ENCODE measurements at regions of chr15 and their contacts with region 1.

Region 1: GRCh38 chr15:55846116-55846707 is 103.3 kb upstream of the PRTG start:
- DNase-seq: peak; percentile 84
- H3K4me3 ChIP-seq: no peak overlapping the region
- H3K27ac ChIP-seq: no peak overlapping the region
- H3K4me1 ChIP-seq: no peaks in the 10 kb centered on the region
- H3K27me3 ChIP-seq: no peaks in the 10 kb centered on the region
- CTCF ChIP-seq: peak; percentile 88

Region 2: DNA sequence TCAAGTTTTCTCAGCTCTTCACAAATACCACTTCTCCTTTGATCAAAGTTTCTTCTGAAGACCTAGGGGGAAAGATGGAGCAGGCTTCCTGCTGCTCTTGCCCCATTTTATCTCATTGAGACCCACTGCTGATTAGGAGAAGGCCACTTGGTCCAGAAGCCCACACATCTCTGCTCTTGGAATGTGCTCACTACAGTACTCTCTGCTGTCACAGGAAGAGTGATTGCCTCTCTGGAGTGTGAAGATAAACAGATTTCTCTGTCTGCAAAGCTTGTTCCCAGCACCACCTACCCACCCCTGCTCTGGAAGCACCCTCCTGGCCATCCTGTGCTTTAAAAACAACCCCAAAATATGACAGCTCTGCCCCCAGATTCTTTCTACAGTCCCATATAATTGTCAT is 61.9 kb before region 1 on chr15:
- CTCF ChIA-PET with region 1: no interaction called
- POLR2A ChIA-PET with region 1: no interaction called
- intact Hi-C with region 1: no loop called
- DNase-seq: no peak
- H3K4me3 ChIP-seq: no peak overlapping the region
- H3K27ac ChIP-seq: no peak overlapping the region
- H3K4me1 ChIP-seq: no peaks in the 10 kb centered on the region
- H3K27me3 ChIP-seq: no peaks in the 10 kb centered on the region
- CTCF ChIP-seq: no peak

Region 3: DNA sequence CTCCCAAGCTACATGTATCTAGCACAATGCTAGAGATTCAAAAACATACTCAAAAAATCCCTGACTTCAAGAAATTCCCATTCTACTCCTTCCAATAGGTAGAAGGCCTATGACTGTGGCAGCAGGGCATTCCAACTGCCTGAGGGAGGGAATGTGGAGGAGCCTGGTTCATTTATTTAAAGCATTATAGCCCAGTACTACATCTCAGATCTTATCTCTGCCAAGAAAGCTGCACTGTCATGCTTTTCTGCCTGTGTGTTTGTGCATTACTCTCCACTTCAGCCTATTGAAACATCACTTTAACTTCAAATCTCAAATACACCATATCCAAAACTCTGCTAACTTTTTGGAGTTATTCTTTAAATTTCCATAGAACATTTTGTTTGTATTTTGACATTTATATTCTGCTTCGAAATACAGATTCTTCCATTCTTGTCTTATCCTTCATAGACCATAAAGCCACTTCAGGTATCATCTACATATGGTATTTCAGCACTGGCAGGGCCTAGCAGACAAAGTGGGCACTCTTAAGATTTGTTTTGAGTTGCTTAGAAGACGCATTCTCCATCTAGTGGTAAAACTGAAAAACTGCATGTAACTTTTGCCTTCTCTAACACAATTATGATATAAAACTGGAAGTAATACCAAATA is 206.3 kb after region 1 on chr15:
- CTCF ChIA-PET with region 1: no interaction called
- POLR2A ChIA-PET with region 1: no interaction called
- intact Hi-C with region 1: loop called (anchors 5 kb)
- DNase-seq: peak; percentile 65
- H3K4me3 ChIP-seq: no peak overlapping the region
- H3K27ac ChIP-seq: no peak overlapping the region
- H3K4me1 ChIP-seq: no peaks in the 10 kb centered on the region
- H3K27me3 ChIP-seq: no peaks in the 10 kb centered on the region
- CTCF ChIP-seq: peak; percentile 79

Measured in A673 (cell line).